Endothelial cell of umbilical vein (primary cell): ENCODE measurements at regions of chr12 and their contacts with region 1.

Region 1: DNA sequence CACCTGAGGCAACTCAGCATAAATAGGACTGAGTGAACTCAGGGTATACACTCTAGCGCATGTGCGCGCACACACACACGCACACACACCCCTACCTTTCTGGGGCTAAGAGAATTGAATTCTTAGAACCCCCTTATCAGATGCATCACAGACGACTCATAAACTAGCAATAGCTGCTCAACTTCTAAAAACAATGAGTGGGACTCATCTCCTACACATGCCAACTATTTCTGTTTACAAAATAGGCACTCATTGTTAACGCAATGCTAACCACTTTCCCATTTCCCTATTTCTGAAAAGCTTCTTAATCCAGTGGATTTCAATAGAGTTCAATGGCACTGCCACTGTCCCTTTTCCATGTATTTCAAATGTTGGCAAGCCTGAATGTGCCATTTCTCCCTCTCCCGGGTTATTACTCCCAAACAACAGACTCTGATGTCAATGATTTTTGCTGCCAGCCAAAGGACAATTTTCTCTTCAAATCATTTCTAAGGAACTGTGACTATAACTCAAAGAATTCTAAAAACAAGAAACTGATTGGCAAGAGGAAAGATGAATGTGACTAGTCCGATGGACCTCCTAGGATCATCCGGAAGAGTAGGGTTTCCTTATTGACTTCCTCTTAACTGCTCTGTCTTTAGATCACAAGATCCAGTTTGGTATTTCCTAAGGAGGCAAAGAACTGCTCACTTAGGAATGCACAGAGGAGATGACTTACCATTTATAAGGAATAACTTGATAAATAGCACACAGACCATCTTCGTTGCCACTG is 48.8 kb downstream of the SLC38A1 start:
- DNase-seq: peak; percentile 82
- H3K4me3 ChIP-seq: peak overlapping the region in 1 of 3 experiments; percentile 37
- H3K27ac ChIP-seq: peak overlapping the region; percentile 97
- H3K4me1 ChIP-seq: peaks cover 49% of the 10 kb centered on the region
- H3K27me3 ChIP-seq: no peaks in the 10 kb centered on the region
- CTCF ChIP-seq: no peak
- POLR2A ChIP-seq: no peak

Region 2: DNA sequence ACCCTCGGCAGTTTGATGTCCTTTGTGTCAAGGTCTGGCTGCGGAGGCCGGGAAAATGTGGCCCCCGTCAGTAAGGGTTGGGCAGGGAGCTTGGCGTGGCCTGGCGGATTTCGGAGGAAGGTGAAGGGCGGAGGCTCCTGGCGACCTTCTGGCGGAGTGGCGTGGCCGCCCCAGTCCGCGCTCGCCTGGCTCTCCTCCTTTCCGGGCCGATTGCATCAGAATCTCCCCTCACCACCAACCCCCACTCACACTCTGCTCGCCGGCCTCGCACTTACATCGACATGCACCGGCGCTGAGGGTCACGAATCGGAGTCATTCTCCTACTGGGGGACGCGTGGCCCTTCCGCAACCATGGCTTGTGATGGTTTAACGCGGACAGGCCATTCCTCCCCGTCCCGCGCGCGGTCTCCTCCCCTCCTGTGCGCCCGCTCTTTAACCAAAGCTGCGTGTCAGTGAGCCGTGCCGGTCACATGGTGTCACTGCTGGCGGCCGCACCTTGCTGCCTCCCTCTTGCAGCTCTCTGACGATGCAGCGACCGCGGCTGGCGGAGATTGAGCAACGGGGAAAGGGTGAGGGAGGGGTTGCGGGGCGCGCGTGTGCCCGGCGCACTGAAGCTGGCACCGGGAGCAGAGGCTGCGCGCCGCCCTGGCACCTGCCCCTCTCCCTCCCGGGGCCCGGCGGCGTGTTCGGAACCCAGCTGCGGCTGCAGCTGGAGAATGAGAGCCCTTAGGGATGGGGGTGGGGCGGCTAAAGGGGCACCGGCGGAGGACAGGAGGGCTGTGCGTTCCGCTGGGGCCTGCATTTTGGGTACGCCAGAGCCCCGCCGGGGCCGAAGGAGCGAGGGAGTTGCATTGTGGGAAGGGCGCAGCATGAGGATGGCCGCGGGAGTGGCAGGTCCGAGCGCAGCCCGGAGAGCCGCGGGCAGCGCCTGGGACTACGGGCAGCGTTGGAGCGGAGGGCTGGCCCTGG is 48.8 kb after region 1 on chr12 and contains the start of gene SLC38A1:
- CTCF ChIA-PET with region 1: interaction called, 3 read pairs
- POLR2A ChIA-PET with region 1: no interaction called
- dilution Hi-C with region 1: no loop called
- intact Hi-C with region 1: loop called (anchors 1 kb)
- DNase-seq: peak; percentile 73
- H3K4me3 ChIP-seq: peak within 1 kb of the TSS; percentile 59 to 85 (median 84)
- H3K27ac ChIP-seq: peak within 1 kb of the TSS; percentile 82
- H3K4me1 ChIP-seq: peaks cover 31% of the 10 kb centered on the region
- H3K27me3 ChIP-seq: no peaks in the 10 kb centered on the region
- CTCF ChIP-seq: no peak
- POLR2A ChIP-seq: peak; percentile 66
- total RNA-seq, gene SLC38A1: 81.0 and 86.4 TPM in 2 replicates

Region 3: GRCh38 chr12:46303039-46303666 is 83.1 kb after region 1 on chr12:
- CTCF ChIA-PET with region 1: interaction called, 4 read pairs
- POLR2A ChIA-PET with region 1: no interaction called
- dilution Hi-C with region 1: no loop called
- intact Hi-C with region 1: loop called (anchors 5 kb)
- DNase-seq: peak; percentile 35
- H3K4me3 ChIP-seq: no peak overlapping the region
- H3K27ac ChIP-seq: no peak overlapping the region
- H3K4me1 ChIP-seq: no peaks in the 10 kb centered on the region
- H3K27me3 ChIP-seq: peaks cover 3 to 12% of the 10 kb centered on the region in 2 experiments
- CTCF ChIP-seq: peak; percentile 54 to 58
- POLR2A ChIP-seq: no peak

Region 4: GRCh38 chr12:46364777-46365580 is 144.9 kb after region 1 on chr12:
- CTCF ChIA-PET with region 1: no interaction called
- POLR2A ChIA-PET with region 1: no interaction called
- dilution Hi-C with region 1: no loop called
- intact Hi-C with region 1: loop called (anchors 5 kb)
- DNase-seq: peak; percentile 72
- H3K4me3 ChIP-seq: peak overlapping the region in 1 of 3 experiments; percentile 43
- H3K27ac ChIP-seq: no peak overlapping the region
- H3K4me1 ChIP-seq: peaks cover 62% of the 10 kb centered on the region
- H3K27me3 ChIP-seq: no peaks in the 10 kb centered on the region
- CTCF ChIP-seq: no peak
- POLR2A ChIP-seq: peak; percentile 30